ENCODE measurements at regions of chr19 and their contacts with region 1.

Region 1: DNA sequence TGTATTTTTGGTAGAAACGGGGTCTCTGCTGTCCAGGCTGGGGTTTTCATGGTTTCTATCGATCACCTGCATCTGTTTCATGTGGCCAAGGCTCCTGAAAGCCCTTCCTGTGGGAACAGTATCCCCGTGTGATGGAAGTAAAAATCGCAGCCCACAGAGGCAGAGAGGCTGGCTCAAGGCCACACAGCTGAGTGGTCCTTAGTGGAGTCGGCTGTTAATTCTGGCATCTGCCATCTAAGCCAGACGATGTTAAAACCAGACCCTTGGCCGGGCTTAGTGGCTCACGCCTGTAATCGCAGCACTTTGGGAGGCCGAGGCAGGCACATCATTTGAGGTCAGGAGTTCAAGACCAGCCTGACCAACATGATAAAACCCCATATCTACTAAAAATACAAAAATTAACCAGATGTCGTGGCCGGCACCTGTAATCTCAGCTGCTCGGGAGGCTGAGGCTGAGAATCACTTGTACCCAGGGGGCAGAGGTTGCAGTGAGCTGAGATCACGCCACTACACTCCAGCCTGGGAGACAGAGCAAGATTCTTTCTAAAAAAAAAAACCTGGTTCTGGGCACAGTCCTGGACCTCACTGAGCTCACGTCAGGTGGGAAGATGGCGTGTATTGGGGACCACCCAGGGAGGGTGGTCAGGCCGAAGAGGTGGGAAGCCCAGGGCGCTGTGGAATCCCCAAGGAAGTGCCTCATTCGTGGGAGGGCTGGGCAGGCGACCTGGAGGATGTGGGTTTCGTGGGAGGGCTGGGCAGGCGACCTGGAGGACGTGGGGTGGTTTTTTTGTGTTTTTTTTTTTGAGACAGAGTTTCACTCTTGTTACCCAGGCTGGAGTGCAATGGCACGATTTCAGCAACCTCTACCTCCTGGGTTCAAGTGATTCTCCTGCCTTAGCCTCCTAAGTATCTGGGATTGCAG is 18.5 kb upstream of the MISP start:
- DNase-seq: no peak
- ATAC-seq: no peak
- H3K4me3 ChIP-seq: no peak overlapping the region
- H3K27ac ChIP-seq: no peak overlapping the region; a peak in 1 of 6 replicates
- H3K4me1 ChIP-seq: 0 out of 3 replicates have a peak, but pooled peaks cover 4% of the 10 kb centered on the region
- CTCF ChIP-seq: no peak
- EP300 ChIP-seq: no peak
- POLR2A ChIP-seq: no peak
- RAD21 ChIP-seq: no peak

Region 2: DNA sequence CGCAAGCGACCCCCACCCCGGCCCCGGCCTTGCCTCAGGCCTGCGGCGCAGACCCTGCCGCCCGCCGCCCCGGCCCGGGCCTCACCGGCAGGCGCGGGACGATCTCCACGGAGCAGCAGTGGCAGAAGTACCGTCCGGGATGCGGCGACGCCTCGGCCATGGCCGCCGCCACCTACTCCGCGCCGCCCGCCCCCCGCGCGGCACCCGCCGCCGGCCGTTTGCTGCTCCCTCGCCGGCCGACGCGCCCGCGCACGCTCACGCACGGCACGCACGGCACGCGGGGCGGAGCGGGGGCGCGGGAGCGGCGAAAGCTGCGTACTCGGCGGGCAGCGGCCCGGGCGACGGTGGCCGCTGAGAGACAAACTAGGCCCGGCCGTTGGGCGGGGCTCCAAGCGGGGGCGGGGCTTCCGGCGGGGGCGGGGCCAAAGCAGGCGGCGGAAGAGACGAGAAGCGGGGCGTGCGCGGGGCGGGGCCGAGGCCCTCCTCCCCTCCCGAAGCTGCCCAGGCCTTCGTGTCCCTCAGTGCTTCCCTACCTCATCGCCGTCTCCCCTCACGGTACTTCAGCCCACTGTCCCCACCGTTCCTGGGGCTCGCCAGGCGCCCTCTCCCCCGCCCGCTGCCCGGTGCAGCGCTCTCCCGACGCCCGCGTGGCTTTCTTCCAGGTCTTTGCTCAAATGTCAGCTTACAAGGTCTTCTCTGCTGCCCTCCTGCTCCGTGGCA is 69.3 kb before region 1 on chr19 and contains the start of gene RNF126:
- CTCF ChIA-PET with region 1: interaction called, 11 read pairs
- POLR2A ChIA-PET with region 1: interaction called, 5 read pairs
- DNase-seq: peak; percentile 72 to 87
- ATAC-seq: peak; percentile 75
- H3K4me3 ChIP-seq: peak within 1 kb of the TSS; percentile 100
- H3K27ac ChIP-seq: peak within 1 kb of the TSS; percentile 99 to 100
- H3K4me1 ChIP-seq: peaks cover 24% of the 10 kb centered on the region; the same call in 2 of the 3 replicates
- CTCF ChIP-seq: no peak
- EP300 ChIP-seq: no peak
- POLR2A ChIP-seq: peak; percentile 45
- RAD21 ChIP-seq: no peak
- polyA plus RNA-seq, gene RNF126: 3.1 and 4.9 TPM in 2 replicates

Region 3: DNA sequence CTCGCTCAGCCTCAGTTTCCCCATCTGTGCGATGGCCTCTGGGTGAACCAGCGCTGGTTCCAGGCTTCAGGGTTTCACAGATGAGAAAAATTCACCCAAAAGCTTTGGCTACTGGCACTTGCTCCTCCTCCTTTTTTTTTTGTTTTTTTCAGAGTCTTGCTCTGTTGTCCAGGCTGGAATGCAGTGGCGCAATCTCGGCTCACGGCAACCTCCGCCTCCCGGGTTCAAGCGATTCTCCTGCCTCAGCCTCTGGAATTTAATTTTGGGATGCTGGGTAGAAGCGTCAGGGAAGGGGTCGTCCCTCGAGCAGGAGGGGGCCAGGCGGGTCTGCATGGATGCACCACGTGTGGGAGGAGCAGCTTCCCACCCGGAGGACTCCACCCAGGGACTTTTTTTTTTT is 44.2 kb before region 1 on chr19:
- CTCF ChIA-PET with region 1: interaction called, 17 read pairs
- POLR2A ChIA-PET with region 1: interaction called, 3 read pairs
- DNase-seq: no peak
- ATAC-seq: peak in 1 of 2 experiments; percentile 13; a peak in 1 of 6 replicates
- H3K4me3 ChIP-seq: no peak overlapping the region
- H3K27ac ChIP-seq: peak overlapping the region; percentile 27 to 72; a peak in 3 of 6 replicates
- H3K4me1 ChIP-seq: peaks cover 10% of the 10 kb centered on the region; the same call in 2 of the 3 replicates
- CTCF ChIP-seq: no peak
- EP300 ChIP-seq: no peak
- POLR2A ChIP-seq: no peak
- RAD21 ChIP-seq: no peak

Region 4: DNA sequence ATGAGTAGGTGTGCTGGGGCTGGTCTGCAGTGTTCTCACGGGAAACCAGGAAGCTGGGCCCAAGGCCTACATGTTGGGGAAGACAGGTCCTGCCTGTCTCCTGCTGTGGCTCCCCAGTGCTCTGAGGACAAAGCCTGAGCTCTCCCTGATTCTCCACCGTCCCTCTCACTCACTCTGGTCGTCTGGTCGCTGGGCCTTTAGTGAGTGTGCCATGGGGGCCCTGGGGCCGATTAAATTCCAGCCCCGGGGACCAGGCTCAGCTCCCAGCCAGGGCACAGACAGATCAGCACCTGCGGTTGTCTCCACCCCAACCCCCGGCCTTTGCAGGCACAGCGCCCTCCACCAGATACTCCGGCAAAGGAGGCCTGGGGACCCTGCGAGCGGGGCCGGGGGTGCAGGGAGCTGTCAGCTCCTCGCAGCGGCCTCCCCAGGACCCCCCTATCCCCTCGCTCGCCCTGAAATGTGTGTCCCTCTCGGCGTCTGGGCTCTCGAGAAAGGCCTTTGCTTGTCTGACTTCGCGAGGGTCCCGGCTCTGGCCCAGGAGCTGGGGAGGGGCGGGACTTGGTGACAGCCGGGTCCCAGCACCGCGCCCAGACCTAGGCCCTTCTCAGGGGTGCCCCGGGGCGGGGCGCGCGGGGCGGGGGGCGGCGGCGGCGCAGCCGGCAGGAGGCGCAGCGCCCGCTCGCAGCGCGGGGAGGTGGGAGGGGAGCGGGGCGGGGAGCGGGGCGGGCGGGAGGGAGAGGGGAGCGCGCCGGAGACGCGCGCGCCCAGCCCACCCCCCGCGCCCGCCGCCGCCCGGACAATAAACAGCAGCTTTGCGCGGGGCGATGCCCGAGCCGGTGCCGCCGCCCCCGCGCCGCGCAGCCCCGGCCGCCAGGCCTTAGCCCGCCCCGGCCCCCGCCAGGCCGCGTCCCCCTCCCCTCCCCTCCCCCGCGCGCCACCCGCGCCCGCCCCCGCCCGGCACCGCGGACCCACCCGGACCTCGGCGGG is 24.0 kb before region 1 on chr19 and contains the start of gene PALM:
- CTCF ChIA-PET with region 1: interaction called, 12 read pairs
- POLR2A ChIA-PET with region 1: interaction called, 8 read pairs
- DNase-seq: no peak
- ATAC-seq: peak; percentile 51 to 77
- H3K4me3 ChIP-seq: peak within 1 kb of the TSS; percentile 97
- H3K27ac ChIP-seq: peak within 1 kb of the TSS; percentile 90 to 99
- H3K4me1 ChIP-seq: peaks cover 14% of the 10 kb centered on the region
- CTCF ChIP-seq: peak; percentile 42
- EP300 ChIP-seq: no peak
- POLR2A ChIP-seq: no peak
- RAD21 ChIP-seq: no peak
- polyA plus RNA-seq, gene PALM: 2.0 and 3.0 TPM in 2 replicates

Measured in A549 (cell line).